Right lobe of liver (tissue), 6 donors: ENCODE measurements at regions of chr12 and their contacts with region 1.

Region 1: DNA sequence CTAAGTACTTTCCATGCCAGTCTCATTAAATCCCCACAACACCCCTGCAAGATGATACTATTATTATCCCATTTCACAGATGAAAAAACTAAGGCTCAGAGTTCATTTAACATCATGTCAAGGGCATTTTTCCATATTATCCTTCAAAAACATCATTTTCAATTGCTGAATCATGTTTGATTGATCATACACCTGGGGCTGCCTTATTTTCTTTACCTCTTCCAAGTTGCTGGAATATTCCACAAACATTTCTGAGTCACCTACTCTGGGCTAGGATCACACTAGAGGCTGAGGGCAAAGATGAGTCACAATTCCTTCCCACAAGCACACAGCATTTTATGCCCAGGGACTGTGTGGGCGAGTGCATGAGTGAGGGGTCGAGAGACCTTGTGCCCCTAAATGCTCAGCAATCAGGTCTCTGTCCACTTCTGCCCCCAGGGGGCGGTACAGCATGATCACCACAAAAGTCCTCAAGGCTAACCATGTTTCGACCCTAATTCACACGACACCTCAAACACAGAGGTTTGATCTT is 14.1 kb upstream of the TMEM119 start:
- DNase-seq: no peak
- ATAC-seq: peak in 2 of 4 donors; percentile 25 to 68
- H3K4me3 ChIP-seq: no peak overlapping the region
- H3K27ac ChIP-seq: no peak overlapping the region
- H3K4me1 ChIP-seq: no peaks in the 10 kb centered on the region
- H3K27me3 ChIP-seq: no peaks in the 10 kb centered on the region
- CTCF ChIP-seq: peak; percentile 9 to 28 (median 21)
- POLR2A ChIP-seq: no peak

Region 2: GRCh38 chr12:108565976-108566375 is 46.0 kb before region 1 on chr12:
- intact Hi-C with region 1: loop called in 1 of 2 experiments (anchors 5 kb)
- DNase-seq: peak; percentile 88 to 91 (median 89)
- ATAC-seq: peak; percentile 43 to 47 (median 47)
- H3K4me3 ChIP-seq: no peak overlapping the region
- H3K27ac ChIP-seq: peak overlapping the region in 2 of 3 donors; percentile 2 to 25
- H3K4me1 ChIP-seq: peaks cover 0 to 25% (median 3%) of the 10 kb centered on the region in 4 donors
- H3K27me3 ChIP-seq: no peaks in the 10 kb centered on the region
- CTCF ChIP-seq: no peak
- POLR2A ChIP-seq: peak; percentile 32

Region 3: GRCh38 chr12:108576660-108577234 is 35.2 kb before region 1 on chr12:
- intact Hi-C with region 1: loop called in 1 of 2 experiments (anchors 5 kb)
- DNase-seq: peak in 1 of 3 donors; percentile 13
- ATAC-seq: no peak
- H3K4me3 ChIP-seq: no peak overlapping the region
- H3K27ac ChIP-seq: no peak overlapping the region
- H3K4me1 ChIP-seq: no peaks in the 10 kb centered on the region
- H3K27me3 ChIP-seq: no peaks in the 10 kb centered on the region
- CTCF ChIP-seq: no peak
- POLR2A ChIP-seq: no peak